ENCODE measurements at regions of chr2 and their contacts with region 1.

Region 1: DNA sequence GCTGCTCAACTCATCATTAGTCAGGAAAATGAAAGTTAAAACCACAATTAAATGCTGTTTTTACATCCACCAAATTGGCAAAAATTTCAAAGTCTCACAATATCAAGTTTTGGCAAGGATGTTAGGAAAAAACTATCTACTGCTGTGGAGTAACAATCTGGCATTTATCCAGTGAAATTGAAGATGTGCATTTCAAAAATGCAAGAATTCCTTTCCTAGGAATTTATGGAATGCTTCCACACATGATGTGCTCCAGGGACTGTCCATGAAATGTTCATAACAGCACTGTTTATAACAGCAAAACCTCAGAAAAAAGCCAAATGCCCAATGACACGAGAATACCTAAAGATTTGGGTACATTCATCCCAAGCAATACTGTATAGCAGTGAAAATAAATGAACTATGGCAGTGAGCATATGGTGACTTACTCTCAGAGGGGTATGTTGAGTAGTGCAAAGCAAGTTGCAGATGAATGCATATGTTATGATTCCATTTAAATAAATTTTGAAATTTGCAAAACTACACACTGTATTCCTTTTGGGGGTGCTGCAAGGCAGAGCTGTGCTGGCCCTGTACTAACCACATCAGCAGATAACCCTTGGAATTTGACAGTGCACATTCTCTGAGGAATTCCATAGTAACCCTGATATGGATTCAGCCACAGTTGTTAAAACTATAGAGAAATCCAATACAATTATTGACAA is 41.3 kb upstream of the GYPC start:
- DNase-seq: no peak
- H3K4me3 ChIP-seq: no peak overlapping the region
- H3K27ac ChIP-seq: no peak overlapping the region
- H3K27me3 ChIP-seq: no peaks in the 10 kb centered on the region
- CTCF ChIP-seq: no peak

Region 2: DNA sequence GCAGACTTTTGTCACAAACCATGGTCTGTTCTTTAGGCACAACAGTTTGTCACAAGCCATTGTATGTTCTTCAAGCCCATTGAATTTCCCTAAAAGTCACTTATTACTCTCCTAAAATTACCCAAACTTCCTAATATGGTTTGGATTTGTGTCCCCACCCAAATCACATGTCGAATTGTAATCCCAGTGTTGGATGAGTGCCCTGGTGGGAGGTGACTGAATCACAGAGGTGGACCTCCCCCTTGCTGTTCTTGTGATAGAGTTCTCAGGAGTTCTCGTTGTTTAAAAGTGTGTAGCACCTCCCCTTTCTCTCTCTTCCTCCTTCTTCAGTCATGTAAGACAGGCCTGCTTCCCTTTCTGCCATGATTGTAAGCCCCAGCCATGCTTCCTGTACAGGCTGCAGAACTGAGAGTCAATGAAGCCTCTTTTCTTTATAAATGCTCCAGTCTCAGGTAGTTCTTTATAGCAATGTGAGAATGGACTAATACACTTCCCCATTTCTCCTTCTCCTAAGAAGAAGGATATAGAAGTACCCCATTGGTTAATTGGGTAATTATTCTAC is 30.0 kb after region 1 on chr2:
- intact Hi-C with region 1: loop called in 1 of 2 experiments (anchors 1 kb)
- DNase-seq: no peak
- H3K4me3 ChIP-seq: no peak overlapping the region
- H3K27ac ChIP-seq: no peak overlapping the region
- H3K27me3 ChIP-seq: no peaks in the 10 kb centered on the region
- CTCF ChIP-seq: no peak

Region 3: GRCh38 chr2:126686841-126687485 is 72.3 kb after region 1 on chr2:
- intact Hi-C with region 1: no loop called
- DNase-seq: no peak
- H3K4me3 ChIP-seq: no peak overlapping the region
- H3K27ac ChIP-seq: no peak overlapping the region
- H3K27me3 ChIP-seq: no peaks in the 10 kb centered on the region
- CTCF ChIP-seq: no peak